Activated CD8-positive, alpha-beta T cell treated with anti-CD3 and anti-CD28 coated beads, Interleukin-2, amount 10 ng/mL, durations not matched to agents 7 days and 5 days (primary cell): ENCODE measurements at regions of chr22 and their contacts with region 1.

Region 1: DNA sequence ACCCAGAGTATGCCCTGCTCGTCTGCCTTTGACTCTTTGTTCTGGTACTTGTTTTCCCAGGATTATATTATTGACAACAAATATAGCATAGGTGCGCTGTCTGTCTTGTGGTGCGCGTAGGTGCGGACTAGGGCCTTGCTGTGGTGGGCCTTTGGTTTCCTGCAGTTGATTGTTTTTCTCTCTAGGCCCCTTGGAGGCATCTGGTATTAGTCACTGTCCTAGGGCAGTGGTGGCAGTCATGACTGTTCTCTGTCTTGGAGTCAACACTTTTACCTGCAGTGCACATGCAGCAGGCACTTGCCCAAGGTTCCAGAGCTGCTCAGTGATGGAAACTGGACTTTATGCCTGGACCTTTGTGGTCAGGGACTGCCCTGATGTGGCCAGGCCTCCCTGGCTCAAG is 18.6 kb downstream of the PPP6R2 start:
- DNase-seq: peak; percentile 53
- ATAC-seq: peak; percentile 81
- H3K4me3 Mint-ChIP-seq: peak overlapping the region; percentile 29
- H3K27ac Mint-ChIP-seq: peak overlapping the region; percentile 78
- H3K4me1 Mint-ChIP-seq: peaks cover 51% of the 10 kb centered on the region
- H3K27me3 Mint-ChIP-seq: no peaks in the 10 kb centered on the region

Region 2: GRCh38 chr22:50376085-50376651 is 14.5 kb after region 1 on chr22:
- CTCF ChIA-PET with region 1: interaction called, 12 read pairs
- POLR2A ChIA-PET with region 1: interaction called, 5 read pairs
- DNase-seq: no peak
- ATAC-seq: no peak
- H3K4me3 Mint-ChIP-seq: no peak overlapping the region
- H3K27ac Mint-ChIP-seq: peak overlapping the region; percentile 77
- H3K4me1 Mint-ChIP-seq: peaks cover 22% of the 10 kb centered on the region
- H3K27me3 Mint-ChIP-seq: no peaks in the 10 kb centered on the region